Ovary (tissue), 10 donors: ENCODE measurements at regions of chr5 and their contacts with region 1.

Region 1: GRCh38 chr5:136062366-136063274 is 33.8 kb downstream of the TGFBI start:
- DNase-seq: no peak
- H3K4me3 ChIP-seq: no peak overlapping the region
- H3K27ac ChIP-seq: no peak overlapping the region
- H3K4me1 ChIP-seq: peaks cover 8% of the 10 kb centered on the region
- H3K27me3 ChIP-seq: no peaks in the 10 kb centered on the region
- CTCF ChIP-seq: peak in 1 of 3 donors; percentile 18
- EP300 ChIP-seq: no peak
- POLR2A ChIP-seq: no peak

Region 2: GRCh38 chr5:135887351-135887864 is 175.2 kb before region 1 on chr5:
- intact Hi-C with region 1: loop called in 1 of 4 experiments (anchors 10 kb)
- DNase-seq: peak; percentile 44 to 57 (median 52)
- H3K4me3 ChIP-seq: no peak overlapping the region
- H3K27ac ChIP-seq: no peak overlapping the region
- H3K4me1 ChIP-seq: peaks cover 9% of the 10 kb centered on the region
- H3K27me3 ChIP-seq: no peaks in the 10 kb centered on the region
- CTCF ChIP-seq: peak; percentile 60 to 69 (median 65)
- EP300 ChIP-seq: no peak
- POLR2A ChIP-seq: no peak

Region 3: GRCh38 chr5:135944967-135945560 is 117.6 kb before region 1 on chr5:
- intact Hi-C with region 1: loop called in 1 of 4 experiments (anchors 10 kb)
- DNase-seq: peak in 3 of 5 donors; percentile 25 to 65 (median 31)
- H3K4me3 ChIP-seq: no peak overlapping the region
- H3K27ac ChIP-seq: no peak overlapping the region
- H3K4me1 ChIP-seq: no peaks in the 10 kb centered on the region
- H3K27me3 ChIP-seq: no peaks in the 10 kb centered on the region
- CTCF ChIP-seq: peak; percentile 41 to 73 (median 51)
- EP300 ChIP-seq: no peak
- POLR2A ChIP-seq: no peak